ENCODE measurements at regions of chrX and their contacts with region 1.

Region 1: GRCh38 chrX:40468033-40468846 is 112.5 kb upstream of the ATP6AP2 start:
- DNase-seq: peak; percentile 60 to 61
- H3K4me3 ChIP-seq: no peak overlapping the region
- H3K4me3 Mint-ChIP-seq: no peak overlapping the region
- H3K27ac Mint-ChIP-seq: no peak overlapping the region
- H3K4me1 ChIP-seq: peaks cover 15% of the 10 kb centered on the region; the same call in 1 of the 2 replicates
- H3K4me1 Mint-ChIP-seq: peaks cover 22% of the 10 kb centered on the region
- H3K27me3 ChIP-seq: no peaks in the 10 kb centered on the region
- H3K27me3 Mint-ChIP-seq: no peaks in the 10 kb centered on the region
- CTCF ChIP-seq: peak in 1 of 2 experiments; percentile 32

Region 2: GRCh38 chrX:39652336-39653131 is 815.7 kb before region 1 on chrX:
- CTCF ChIA-PET with region 1: interaction called, 10 read pairs
- POLR2A ChIA-PET with region 1: no interaction called
- intact Hi-C with region 1: no loop called
- DNase-seq: peak; percentile 30 to 34
- H3K4me3 ChIP-seq: no peak overlapping the region
- H3K4me3 Mint-ChIP-seq: no peak overlapping the region
- H3K27ac Mint-ChIP-seq: no peak overlapping the region
- H3K4me1 ChIP-seq: no peaks in the 10 kb centered on the region
- H3K4me1 Mint-ChIP-seq: no peaks in the 10 kb centered on the region
- H3K27me3 ChIP-seq: no peaks in the 10 kb centered on the region
- H3K27me3 Mint-ChIP-seq: peaks cover 3% of the 10 kb centered on the region
- CTCF ChIP-seq: peak; percentile 30 to 49

Region 3: GRCh38 chrX:40040686-40041461 is 427.4 kb before region 1 on chrX:
- CTCF ChIA-PET with region 1: no interaction called
- POLR2A ChIA-PET with region 1: no interaction called
- intact Hi-C with region 1: no loop called
- DNase-seq: no peak
- H3K4me3 ChIP-seq: no peak overlapping the region
- H3K4me3 Mint-ChIP-seq: no peak overlapping the region
- H3K27ac Mint-ChIP-seq: no peak overlapping the region
- H3K4me1 ChIP-seq: no peaks in the 10 kb centered on the region
- H3K4me1 Mint-ChIP-seq: peaks cover 6% of the 10 kb centered on the region
- H3K27me3 ChIP-seq: no peaks in the 10 kb centered on the region
- H3K27me3 Mint-ChIP-seq: no peaks in the 10 kb centered on the region
- CTCF ChIP-seq: no peak

Region 4: DNA sequence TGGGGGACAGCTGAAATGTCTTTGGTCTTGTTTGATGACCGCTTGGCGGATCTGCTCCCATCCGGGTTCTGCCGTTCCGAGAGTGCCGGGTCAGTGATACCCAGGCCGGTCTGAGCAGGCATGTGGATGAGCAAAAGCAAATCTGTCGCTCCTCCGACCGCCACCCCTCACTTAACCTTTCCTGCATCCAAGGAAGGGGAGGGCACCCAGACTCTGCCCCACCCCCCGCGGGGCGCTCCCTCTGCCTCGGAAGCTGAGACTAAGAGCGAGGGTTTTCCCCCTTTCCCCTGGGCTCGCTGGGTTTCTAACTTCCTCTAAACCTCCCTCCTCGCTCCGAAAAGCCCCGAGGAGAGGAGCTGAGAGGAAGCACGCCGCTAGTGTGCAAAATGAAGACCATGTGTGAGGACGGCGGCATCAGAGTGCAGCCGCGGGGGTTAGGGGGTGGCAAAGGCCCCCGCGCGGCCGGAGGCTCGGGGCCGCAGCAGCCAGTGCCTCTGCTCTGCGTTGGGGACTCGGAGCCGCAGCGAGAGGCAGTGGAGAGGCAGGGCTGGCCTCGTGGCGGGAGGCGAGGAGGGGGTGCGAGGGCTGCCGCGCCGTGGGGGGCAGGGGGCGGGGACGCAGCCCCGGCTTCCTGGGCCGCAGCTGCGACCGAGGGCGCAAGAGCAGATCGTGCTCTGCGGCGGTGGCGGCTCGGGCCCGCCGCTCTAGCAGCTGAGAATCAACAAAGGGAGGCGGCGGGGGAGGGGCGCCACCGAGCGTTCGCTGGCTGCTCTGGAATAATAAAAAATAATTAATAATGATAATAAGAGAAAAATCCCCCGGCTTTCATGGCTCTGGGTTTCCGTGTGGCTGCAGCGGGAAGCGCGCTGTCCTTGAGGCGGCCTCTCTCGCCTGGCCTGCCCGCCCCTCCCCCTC is 314.6 kb before region 1 on chrX:
- CTCF ChIA-PET with region 1: no interaction called
- POLR2A ChIA-PET with region 1: no interaction called
- intact Hi-C with region 1: loop called (anchors 5 kb)
- DNase-seq: peak in 1 of 2 experiments; percentile 40
- H3K4me3 ChIP-seq: peak overlapping the region; percentile 41
- H3K4me3 Mint-ChIP-seq: peak overlapping the region; percentile 79
- H3K27ac Mint-ChIP-seq: no peak overlapping the region
- H3K4me1 ChIP-seq: 0 out of 2 replicates have a peak, but pooled peaks cover 6% of the 10 kb centered on the region
- H3K4me1 Mint-ChIP-seq: no peaks in the 10 kb centered on the region
- H3K27me3 ChIP-seq: no peaks in the 10 kb centered on the region
- H3K27me3 Mint-ChIP-seq: no peaks in the 10 kb centered on the region
- CTCF ChIP-seq: no peak

Region 5: DNA sequence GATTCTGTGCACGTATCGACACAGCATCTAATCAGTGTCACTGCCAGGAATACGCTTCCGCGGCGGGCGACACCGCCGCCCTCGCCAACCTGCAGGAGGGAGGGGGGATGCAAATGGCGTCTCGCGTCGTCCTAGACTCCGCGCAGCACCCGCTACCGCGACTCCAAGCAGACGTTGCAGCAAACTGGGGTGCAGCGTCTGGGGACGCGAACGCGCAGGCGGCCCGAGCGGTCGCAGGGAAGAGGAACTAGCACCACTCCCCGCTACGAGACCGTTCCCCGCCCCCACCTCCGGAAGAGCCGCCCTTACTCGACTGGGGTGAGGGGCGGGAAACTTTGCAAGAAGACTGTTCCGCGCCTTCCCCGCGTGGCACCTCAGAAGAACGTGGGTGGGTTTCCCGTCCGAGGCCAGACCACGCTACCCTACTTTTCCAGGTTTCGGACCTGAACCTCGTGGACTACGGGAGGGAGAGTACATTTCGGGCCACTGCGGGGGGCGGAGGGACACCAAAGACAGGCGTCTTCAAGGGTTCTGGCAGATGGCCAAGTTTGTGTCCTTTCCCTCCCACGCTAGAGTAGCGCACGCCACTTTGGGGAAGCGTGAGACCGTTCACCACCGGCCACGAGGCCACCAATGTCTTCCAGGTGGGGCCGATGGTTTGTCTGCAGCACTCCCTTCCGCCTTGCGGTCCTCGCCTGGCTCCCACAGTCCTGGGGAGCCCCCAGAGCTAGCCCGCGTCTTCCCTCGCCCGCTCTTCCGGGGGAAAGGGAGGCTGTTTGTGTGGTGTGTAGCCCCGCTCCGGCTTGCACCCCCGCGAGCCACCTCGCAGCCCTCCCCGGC is 292.5 kb before region 1 on chrX:
- CTCF ChIA-PET with region 1: interaction called, 3 read pairs
- POLR2A ChIA-PET with region 1: interaction called, 7 read pairs
- intact Hi-C with region 1: loop called (anchors 1 kb)
- DNase-seq: peak; percentile 63 to 67
- H3K4me3 ChIP-seq: peak overlapping the region; percentile 59
- H3K4me3 Mint-ChIP-seq: peak overlapping the region; percentile 87
- H3K27ac Mint-ChIP-seq: peak overlapping the region; percentile 93
- H3K4me1 ChIP-seq: peaks cover 11% of the 10 kb centered on the region
- H3K4me1 Mint-ChIP-seq: no peaks in the 10 kb centered on the region
- H3K27me3 ChIP-seq: no peaks in the 10 kb centered on the region
- H3K27me3 Mint-ChIP-seq: no peaks in the 10 kb centered on the region
- CTCF ChIP-seq: no peak

Region 6: DNA sequence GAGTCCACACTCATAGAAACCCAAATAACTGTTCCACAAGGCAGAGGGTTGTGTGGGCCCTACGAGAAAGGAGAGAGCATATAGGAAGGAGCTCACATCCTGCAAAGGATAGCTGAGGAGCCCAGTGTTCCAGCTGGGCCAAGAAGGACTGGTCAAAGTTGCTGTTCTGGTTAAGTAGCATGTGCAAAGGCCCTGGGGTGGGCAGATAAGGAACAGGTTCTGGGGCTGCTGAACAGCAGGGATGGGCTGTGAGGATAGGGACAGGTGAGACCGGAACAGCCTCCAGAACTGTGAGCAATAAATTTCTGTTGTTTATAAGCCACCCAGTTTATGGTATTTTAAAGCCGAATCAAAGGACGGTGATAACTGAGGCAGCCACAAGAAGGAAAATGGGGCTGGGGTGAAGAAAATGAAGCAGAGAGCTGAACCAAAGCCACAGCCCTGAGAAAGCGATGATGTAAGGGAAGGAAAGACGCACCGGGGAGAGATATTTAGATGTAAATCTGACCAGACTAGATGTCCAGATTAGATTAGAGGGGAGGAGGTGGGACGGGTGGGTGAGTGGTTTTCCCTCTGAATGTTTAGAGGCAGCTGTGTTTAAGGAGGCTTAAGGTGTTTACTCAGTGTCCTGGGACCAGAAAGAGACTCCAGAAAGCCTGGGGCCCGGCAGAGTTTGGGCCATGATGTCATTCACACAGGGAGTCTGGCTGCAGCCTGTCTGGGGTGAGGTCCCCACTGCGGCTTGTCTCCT is 189.7 kb before region 1 on chrX:
- CTCF ChIA-PET with region 1: no interaction called
- POLR2A ChIA-PET with region 1: no interaction called
- intact Hi-C with region 1: loop called (anchors 5 kb)
- DNase-seq: peak; percentile 75 to 77
- H3K4me3 ChIP-seq: no peak overlapping the region
- H3K4me3 Mint-ChIP-seq: no peak overlapping the region
- H3K27ac Mint-ChIP-seq: peak overlapping the region; percentile 83
- H3K4me1 ChIP-seq: peaks cover 14% of the 10 kb centered on the region
- H3K4me1 Mint-ChIP-seq: peaks cover 6% of the 10 kb centered on the region
- H3K27me3 ChIP-seq: no peaks in the 10 kb centered on the region
- H3K27me3 Mint-ChIP-seq: no peaks in the 10 kb centered on the region
- CTCF ChIP-seq: no peak

Region 7: GRCh38 chrX:40637687-40638086 is 169.4 kb after region 1 on chrX:
- CTCF ChIA-PET with region 1: no interaction called
- POLR2A ChIA-PET with region 1: no interaction called
- intact Hi-C with region 1: no loop called
- DNase-seq: no peak
- H3K4me3 ChIP-seq: no peak overlapping the region
- H3K4me3 Mint-ChIP-seq: no peak overlapping the region
- H3K27ac Mint-ChIP-seq: no peak overlapping the region
- H3K4me1 ChIP-seq: no peaks in the 10 kb centered on the region
- H3K4me1 Mint-ChIP-seq: no peaks in the 10 kb centered on the region
- H3K27me3 ChIP-seq: no peaks in the 10 kb centered on the region
- H3K27me3 Mint-ChIP-seq: no peaks in the 10 kb centered on the region
- CTCF ChIP-seq: no peak

Measured in Caco-2 (cell line).